ENCODE measurements at regions of chr13 and their contacts with region 1.

Region 1: DNA sequence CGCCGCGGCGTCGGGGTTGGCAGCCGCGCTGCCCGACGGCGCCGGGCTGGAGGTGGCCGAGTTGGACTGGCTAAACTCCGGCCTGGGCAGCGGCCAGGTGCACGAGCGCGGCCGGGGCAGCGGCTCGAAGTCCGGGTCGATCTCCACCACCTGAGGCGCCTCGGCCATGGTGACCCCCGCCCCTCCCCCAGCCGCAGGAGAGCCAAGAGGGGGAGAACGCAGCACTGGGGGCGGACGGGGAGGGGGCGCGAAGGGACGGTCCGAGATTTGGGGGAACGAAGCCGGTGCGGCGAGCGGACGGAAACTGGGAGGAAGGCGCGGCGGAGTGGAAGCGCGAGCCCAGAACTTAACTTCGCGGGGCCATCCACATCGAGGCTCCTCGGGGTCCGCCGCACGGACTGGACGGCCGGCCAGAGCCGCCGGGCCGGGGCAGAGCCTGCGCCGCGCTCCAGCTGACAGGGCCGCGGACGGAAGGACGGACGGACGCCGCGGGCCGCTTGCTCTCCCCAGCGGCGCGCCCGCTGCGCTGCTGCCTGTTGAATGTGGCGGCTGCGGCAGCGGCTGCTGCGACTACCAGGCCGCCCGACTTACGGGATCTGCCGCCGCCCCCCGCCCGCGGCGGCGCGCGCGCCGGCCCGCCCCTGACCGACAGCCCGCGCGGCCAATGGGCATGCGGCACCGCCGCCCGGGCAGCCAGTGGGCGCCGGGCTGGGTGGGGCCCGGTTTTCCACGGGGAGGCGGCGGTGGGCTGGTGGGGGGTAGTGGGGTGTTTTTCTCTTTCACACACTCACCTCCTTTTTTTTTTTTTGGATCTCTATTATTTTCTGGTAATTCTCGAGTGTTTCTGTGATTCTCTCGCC is at the start of gene FOXO1:
- DNase-seq: peak; percentile 94
- ATAC-seq: peak; percentile 69
- H3K4me3 Mint-ChIP-seq: peak within 1 kb of the TSS; percentile 93
- H3K27ac Mint-ChIP-seq: peak within 1 kb of the TSS; percentile 94
- H3K4me1 Mint-ChIP-seq: peaks cover 40% of the 10 kb centered on the region
- H3K27me3 Mint-ChIP-seq: no peaks in the 10 kb centered on the region
- CTCF ChIP-seq: no peak
- total RNA-seq, gene FOXO1: 47.5 and 50.4 TPM in 2 replicates

Region 2: GRCh38 chr13:39956036-39956435 is 710.2 kb before region 1 on chr13:
- CTCF ChIA-PET with region 1: no interaction called
- POLR2A ChIA-PET with region 1: no interaction called
- intact Hi-C with region 1: no loop called
- DNase-seq: no peak
- ATAC-seq: peak; percentile 80
- H3K4me3 Mint-ChIP-seq: no peak overlapping the region
- H3K27ac Mint-ChIP-seq: peak overlapping the region; percentile 2
- H3K4me1 Mint-ChIP-seq: peaks cover 39% of the 10 kb centered on the region
- H3K27me3 Mint-ChIP-seq: no peaks in the 10 kb centered on the region
- CTCF ChIP-seq: no peak

Region 3: DNA sequence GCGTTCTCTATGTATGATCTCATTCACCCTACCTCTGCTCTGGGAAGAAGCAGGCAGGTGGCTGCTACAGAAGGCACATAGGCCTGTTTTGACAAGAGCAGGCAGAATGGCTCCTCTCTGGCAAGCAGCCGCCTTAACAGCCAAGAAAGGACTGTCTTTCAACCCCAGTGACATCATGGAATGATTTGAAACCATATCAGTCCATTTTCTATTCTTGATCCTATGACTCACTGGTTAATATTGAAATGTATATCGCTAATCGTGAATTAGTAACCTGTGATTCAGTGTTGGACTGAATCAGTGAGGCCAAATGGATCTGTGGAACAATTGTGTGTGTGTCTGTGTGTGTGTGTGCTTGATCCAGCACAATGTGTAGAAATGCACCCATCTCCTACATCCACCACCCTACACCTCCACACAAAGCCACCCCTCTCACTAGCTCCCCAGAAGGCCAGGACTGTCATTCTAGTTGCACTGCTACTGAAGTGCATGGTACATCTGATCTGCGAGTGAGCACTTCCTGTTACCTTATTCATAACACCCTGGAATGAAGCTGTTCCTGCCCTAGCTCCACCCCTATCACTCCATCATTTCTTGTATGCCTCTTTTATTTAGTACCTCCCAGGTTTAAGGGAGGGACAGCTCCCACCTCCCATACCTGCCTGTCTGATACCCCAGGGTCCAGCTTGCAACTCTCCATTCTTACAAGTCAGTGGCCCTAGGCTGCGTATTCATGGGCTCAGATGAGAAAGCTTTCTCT is 459.9 kb before region 1 on chr13:
- CTCF ChIA-PET with region 1: interaction called, 3 read pairs
- POLR2A ChIA-PET with region 1: interaction called, 24 read pairs
- intact Hi-C with region 1: loop called (anchors 1 kb)
- DNase-seq: peak; percentile 52
- ATAC-seq: peak; percentile 66
- H3K4me3 Mint-ChIP-seq: peak overlapping the region; percentile 76
- H3K27ac Mint-ChIP-seq: peak overlapping the region; percentile 100
- H3K4me1 Mint-ChIP-seq: peaks cover 72% of the 10 kb centered on the region
- H3K27me3 Mint-ChIP-seq: no peaks in the 10 kb centered on the region
- CTCF ChIP-seq: no peak

Region 4: GRCh38 chr13:40388617-40389016 is 277.7 kb before region 1 on chr13:
- CTCF ChIA-PET with region 1: no interaction called
- POLR2A ChIA-PET with region 1: interaction called, 5 read pairs
- intact Hi-C with region 1: loop called (anchors 5 kb)
- DNase-seq: peak; percentile 46
- ATAC-seq: peak; percentile 97
- H3K4me3 Mint-ChIP-seq: peak overlapping the region; percentile 83
- H3K27ac Mint-ChIP-seq: peak overlapping the region; percentile 95
- H3K4me1 Mint-ChIP-seq: peaks cover 29% of the 10 kb centered on the region
- H3K27me3 Mint-ChIP-seq: no peaks in the 10 kb centered on the region
- CTCF ChIP-seq: no peak

Region 5: DNA sequence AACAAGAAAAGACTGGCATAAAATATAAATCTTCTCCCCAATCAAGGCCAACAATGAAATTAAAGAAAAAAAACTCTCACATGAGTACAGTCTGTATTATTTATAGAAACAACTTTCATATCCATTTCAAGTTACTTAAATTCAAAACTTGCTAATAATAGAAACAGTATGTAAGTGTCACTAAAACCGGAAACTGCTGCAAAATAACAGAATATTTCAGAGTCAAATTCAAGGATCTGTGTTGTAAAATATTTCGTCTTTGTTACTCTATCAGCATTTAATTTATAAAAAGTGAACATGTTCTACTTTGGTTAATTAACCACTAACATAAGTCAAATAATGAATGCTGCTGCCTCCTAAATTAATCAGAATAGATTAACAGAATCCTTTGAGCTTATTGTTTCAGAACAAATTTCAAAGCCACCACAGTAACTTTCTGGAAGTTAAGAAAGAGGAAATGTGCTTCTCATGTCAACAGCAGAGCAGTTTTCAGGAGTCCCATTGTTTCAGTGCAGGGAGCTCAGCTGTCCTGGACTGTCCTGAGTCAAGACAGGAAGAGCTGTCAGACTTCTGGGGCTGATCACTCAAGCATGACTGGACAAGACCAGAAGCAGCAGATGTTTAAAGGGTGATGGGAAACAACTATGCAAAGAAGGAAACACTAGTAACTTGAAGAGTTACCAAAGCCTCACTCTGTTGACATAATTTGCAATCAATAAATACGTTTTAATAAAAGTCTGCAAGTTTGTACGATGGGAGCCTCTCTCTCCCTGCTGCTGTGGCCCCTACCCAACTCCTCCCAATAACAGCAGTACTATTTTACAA is 76.8 kb before region 1 on chr13:
- CTCF ChIA-PET with region 1: no interaction called
- POLR2A ChIA-PET with region 1: interaction called, 24 read pairs
- intact Hi-C with region 1: loop called (anchors 1 kb)
- DNase-seq: no peak
- ATAC-seq: peak; percentile 89
- H3K4me3 Mint-ChIP-seq: peak overlapping the region; percentile 81
- H3K27ac Mint-ChIP-seq: peak overlapping the region; percentile 96
- H3K4me1 Mint-ChIP-seq: peaks cover 99% of the 10 kb centered on the region
- H3K27me3 Mint-ChIP-seq: no peaks in the 10 kb centered on the region
- CTCF ChIP-seq: no peak

Region 6: GRCh38 chr13:40653527-40654318 is 12.6 kb before region 1 on chr13:
- CTCF ChIA-PET with region 1: interaction called, 3 read pairs
- POLR2A ChIA-PET with region 1: interaction called, 64 read pairs
- intact Hi-C with region 1: loop called (anchors 1 kb)
- DNase-seq: no peak
- ATAC-seq: peak; percentile 8
- H3K4me3 Mint-ChIP-seq: peak overlapping the region; percentile 79
- H3K27ac Mint-ChIP-seq: peak overlapping the region; percentile 91
- H3K4me1 Mint-ChIP-seq: peaks cover 94% of the 10 kb centered on the region
- H3K27me3 Mint-ChIP-seq: no peaks in the 10 kb centered on the region
- CTCF ChIP-seq: no peak

Region 7: GRCh38 chr13:40798380-40798779 is 132.1 kb after region 1 on chr13:
- CTCF ChIA-PET with region 1: no interaction called
- POLR2A ChIA-PET with region 1: no interaction called
- intact Hi-C with region 1: no loop called
- DNase-seq: no peak
- ATAC-seq: no peak
- H3K4me3 Mint-ChIP-seq: no peak overlapping the region
- H3K27ac Mint-ChIP-seq: no peak overlapping the region
- H3K4me1 Mint-ChIP-seq: no peaks in the 10 kb centered on the region
- H3K27me3 Mint-ChIP-seq: no peaks in the 10 kb centered on the region
- CTCF ChIP-seq: no peak

Region 8: GRCh38 chr13:41019011-41019487 is 352.8 kb after region 1 on chr13 and contains the start of gene ELF1:
- CTCF ChIA-PET with region 1: no interaction called
- POLR2A ChIA-PET with region 1: interaction called, 3 read pairs
- intact Hi-C with region 1: loop called (anchors 10 kb)
- DNase-seq: peak; percentile 26
- ATAC-seq: peak; percentile 87
- H3K4me3 Mint-ChIP-seq: peak within 1 kb of the TSS; percentile 94
- H3K27ac Mint-ChIP-seq: peak within 1 kb of the TSS; percentile 99
- H3K4me1 Mint-ChIP-seq: peaks cover 46% of the 10 kb centered on the region
- H3K27me3 Mint-ChIP-seq: no peaks in the 10 kb centered on the region
- CTCF ChIP-seq: no peak
- total RNA-seq, gene ELF1: 129 and 136 TPM in 2 replicates

Measured in activated B cell treated with CpG ODN at 0.5 μM for 24 hours (primary cell).